CD4-positive, alpha-beta memory T cell (primary cell): ENCODE measurements at regions of chr12 and their contacts with region 1.

Region 1: GRCh38 chr12:6451348-6452244 is at the start of gene TAPBPL:
- DNase-seq: peak; percentile 85 to 94 (median 86)
- H3K4me3 ChIP-seq: peak within 1 kb of the TSS; percentile 80
- H3K4me3 Mint-ChIP-seq: peak within 1 kb of the TSS; percentile 96 to 100 (median 98)
- H3K27ac ChIP-seq: peak within 1 kb of the TSS; percentile 99
- H3K27ac Mint-ChIP-seq: peak within 1 kb of the TSS; percentile 95 to 99 (median 99)
- H3K4me1 ChIP-seq: peaks cover 68% of the 10 kb centered on the region
- H3K4me1 Mint-ChIP-seq: peaks cover 45 to 79% (median 64%) of the 10 kb centered on the region in 4 donors
- H3K27me3 ChIP-seq: no peaks in the 10 kb centered on the region
- H3K27me3 Mint-ChIP-seq: no peaks in the 10 kb centered on the region
- total RNA-seq, gene TAPBPL: 66.4 to 66.9 TPM

Region 2: DNA sequence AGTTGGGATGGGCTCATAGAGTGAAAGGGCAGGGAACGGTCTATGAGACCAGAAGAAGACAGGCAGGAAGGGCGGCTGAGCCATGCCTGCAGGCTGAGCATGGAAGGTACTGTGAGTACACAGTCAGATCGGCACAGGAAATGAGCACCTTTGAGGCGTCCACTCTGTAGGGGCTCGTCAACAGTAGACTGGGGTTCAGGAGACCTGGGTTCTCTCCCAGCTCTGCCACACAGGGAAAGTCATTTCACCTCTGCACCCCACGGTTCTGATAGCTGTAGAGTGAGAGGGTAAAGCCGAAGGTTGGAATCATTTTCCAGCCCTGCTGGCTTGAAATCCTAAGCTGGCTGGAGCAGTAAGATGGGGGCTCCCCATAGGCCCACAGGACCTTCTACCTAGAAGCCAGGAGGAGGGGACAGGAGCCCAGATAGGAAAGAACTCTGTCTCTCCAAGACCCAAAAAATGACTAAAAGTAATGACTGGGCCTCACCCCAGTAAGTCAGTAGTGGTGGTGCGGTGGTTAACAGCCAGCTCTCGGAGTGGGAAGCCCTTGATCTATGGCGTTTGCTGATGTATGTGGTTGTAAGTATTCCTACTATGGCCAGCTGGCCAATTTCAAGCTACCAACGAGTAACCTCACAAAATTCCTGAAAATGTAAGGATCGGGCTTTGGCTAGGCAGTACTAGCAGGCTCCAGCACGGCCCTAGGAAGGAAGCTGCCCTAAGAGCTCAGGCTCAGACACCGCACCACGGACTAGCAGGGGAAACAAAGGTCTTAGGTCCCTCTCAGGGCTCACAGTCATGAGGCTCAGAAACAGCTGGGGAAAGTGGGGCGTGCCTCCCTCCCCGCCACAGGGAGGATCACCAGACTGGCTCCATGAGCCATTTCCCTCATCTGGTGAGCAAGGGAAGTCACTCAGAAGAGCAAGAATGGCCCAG is 17.1 kb before region 1 on chr12:
- CTCF ChIA-PET with region 1: interaction called, 4 read pairs
- POLR2A ChIA-PET with region 1: interaction called, 728 read pairs
- intact Hi-C with region 1: no loop called
- DNase-seq: peak in 4 of 5 donors; percentile 24 to 58 (median 38)
- H3K4me3 ChIP-seq: no peak overlapping the region
- H3K4me3 Mint-ChIP-seq: peak overlapping the region in 7 of 8 donors; percentile 36 to 72 (median 58)
- H3K27ac ChIP-seq: no peak overlapping the region
- H3K27ac Mint-ChIP-seq: peak overlapping the region in 5 of 7 donors; percentile 78 to 90 (median 82)
- H3K4me1 ChIP-seq: peaks cover 29% of the 10 kb centered on the region
- H3K4me1 Mint-ChIP-seq: peaks cover 13 to 42% (median 28%) of the 10 kb centered on the region in 4 donors
- H3K27me3 ChIP-seq: no peaks in the 10 kb centered on the region
- H3K27me3 Mint-ChIP-seq: no peaks in the 10 kb centered on the region

Region 3: DNA sequence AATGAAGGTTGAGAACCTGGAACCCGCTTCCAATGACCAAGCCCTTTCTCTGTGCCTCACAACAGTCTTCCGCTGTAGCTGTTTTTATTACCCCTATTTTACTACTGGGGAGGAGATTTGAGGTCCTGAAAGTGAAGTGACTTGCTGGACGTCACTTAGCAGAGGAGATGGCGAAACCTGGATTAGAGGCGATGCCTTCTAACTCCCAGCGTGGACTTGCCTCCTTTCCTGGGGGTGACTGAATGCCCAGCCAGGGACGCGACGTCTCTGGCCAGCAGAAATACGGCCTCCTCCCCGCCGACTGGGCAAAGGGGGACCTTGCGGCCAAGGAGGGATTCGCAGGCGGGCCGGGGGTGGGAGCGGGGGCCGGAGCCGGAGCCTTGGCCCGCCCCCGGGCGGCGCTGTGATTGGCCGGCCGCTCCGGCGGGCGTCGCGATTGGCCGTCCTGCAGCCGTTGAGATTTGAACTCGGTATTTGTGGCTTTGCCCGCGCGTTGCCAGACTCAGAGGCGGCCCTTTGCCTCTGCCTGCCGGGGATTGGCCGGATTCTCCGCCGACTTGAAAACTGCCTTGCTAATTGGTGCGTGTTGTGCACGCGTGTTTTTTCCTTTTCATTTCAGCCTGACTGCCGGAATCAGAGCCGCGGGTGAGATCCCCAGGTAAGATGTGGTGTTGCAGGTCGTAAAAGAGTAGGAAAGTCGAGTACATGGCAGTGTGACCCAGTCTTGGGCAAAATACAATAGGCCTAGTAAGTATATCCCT is 42.1 kb after region 1 on chr12 and contains the start of gene NCAPD2:
- CTCF ChIA-PET with region 1: no interaction called
- POLR2A ChIA-PET with region 1: interaction called, 14 read pairs
- intact Hi-C with region 1: no loop called
- DNase-seq: peak; percentile 96 to 97 (median 96)
- H3K4me3 ChIP-seq: peak within 1 kb of the TSS; percentile 98 to 99
- H3K4me3 Mint-ChIP-seq: peak within 1 kb of the TSS; percentile 89 to 98 (median 96)
- H3K27ac ChIP-seq: peak within 1 kb of the TSS; percentile 87
- H3K27ac Mint-ChIP-seq: peak within 1 kb of the TSS; percentile 90 to 99 (median 97)
- H3K4me1 ChIP-seq: peaks cover 37% of the 10 kb centered on the region
- H3K4me1 Mint-ChIP-seq: peaks cover 26 to 46% (median 35%) of the 10 kb centered on the region in 4 donors
- H3K27me3 ChIP-seq: no peaks in the 10 kb centered on the region
- H3K27me3 Mint-ChIP-seq: no peaks in the 10 kb centered on the region
- total RNA-seq, gene NCAPD2: 38.1 to 39.8 TPM